Activated naive CD8-positive, alpha-beta T cell treated with anti-CD3 and anti-CD28 coated beads, Interleukin-2, amount 10 ng/mL, durations not matched to agents 7 days and 5 days (primary cell): ENCODE measurements at regions of chrX and their contacts with region 1.

Region 1: GRCh38 chrX:130110379-130111219 is at the start of gene ELF4:
- DNase-seq: peak; percentile 60
- ATAC-seq: peak; percentile 65
- H3K4me3 Mint-ChIP-seq: peak within 1 kb of the TSS; percentile 95
- H3K27ac Mint-ChIP-seq: peak within 1 kb of the TSS; percentile 93
- H3K4me1 Mint-ChIP-seq: peaks cover 20% of the 10 kb centered on the region
- H3K27me3 Mint-ChIP-seq: no peaks in the 10 kb centered on the region
- total RNA-seq, gene ELF4: 38.4 to 41.0 TPM

Region 2: DNA sequence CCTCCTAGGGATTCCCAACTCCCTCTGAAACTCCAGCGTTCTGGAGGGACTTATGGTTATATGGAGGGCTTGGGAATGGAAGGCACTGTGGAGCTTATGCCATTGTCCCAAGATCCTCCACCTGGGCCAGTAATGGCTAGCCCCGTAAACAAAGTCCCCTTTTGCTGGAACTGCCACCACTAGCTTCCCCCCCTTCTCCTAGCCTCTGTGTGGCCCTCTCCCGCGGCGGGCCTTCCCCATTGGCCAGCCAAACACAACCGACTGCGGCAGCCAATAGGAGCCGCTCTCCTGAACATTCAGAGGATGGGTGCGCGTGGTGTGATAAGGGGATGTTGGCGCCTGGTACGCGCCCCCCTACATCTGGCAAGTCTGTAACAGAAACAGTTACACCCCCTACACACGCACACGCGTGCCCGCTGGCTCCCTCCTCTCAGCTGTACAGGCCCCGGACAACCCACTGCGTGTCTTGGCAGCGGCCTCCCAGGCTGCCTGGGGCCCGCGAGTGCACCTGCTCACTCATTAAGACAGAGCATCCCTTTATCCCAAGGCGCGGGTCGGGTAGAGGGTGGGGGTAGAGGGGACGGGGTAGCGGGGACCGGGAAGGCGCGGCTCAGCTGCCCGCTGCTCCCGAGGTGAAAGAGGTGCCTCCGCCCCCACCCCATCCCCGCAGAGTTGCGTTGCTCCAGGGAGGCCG is 60.3 kb after region 1 on chrX:
- POLR2A ChIA-PET with region 1: interaction called, 16 read pairs
- DNase-seq: peak; percentile 74
- ATAC-seq: peak; percentile 89
- H3K4me3 Mint-ChIP-seq: peak overlapping the region; percentile 94
- H3K27ac Mint-ChIP-seq: peak overlapping the region; percentile 89
- H3K4me1 Mint-ChIP-seq: peaks cover 19% of the 10 kb centered on the region
- H3K27me3 Mint-ChIP-seq: no peaks in the 10 kb centered on the region